ENCODE measurements at regions of chr21 and their contacts with region 1.

Region 1: GRCh38 chr21:44752634-44753291 is 41.4 kb upstream of the TSPEAR start:
- DNase-seq: no peak
- H3K4me3 ChIP-seq: no peak overlapping the region
- H3K27ac ChIP-seq: no peak overlapping the region
- H3K4me1 ChIP-seq: peaks cover 0 to 33% (median 18%) of the 10 kb centered on the region in 4 experiments; a peak in 6 of 7 replicates
- H3K27me3 ChIP-seq: 0 out of 7 replicates have a peak, but pooled peaks cover 0 to 7% (median under 1%) of the 10 kb centered on the region in 4 experiments
- CTCF ChIP-seq: peak in 1 of 3 experiments; percentile 35; a peak in 1 of 4 replicates
- EP300 ChIP-seq: no peak
- POLR2A ChIP-seq: no peak
- RAD21 ChIP-seq: peak in 1 of 2 experiments; percentile 6; a peak in 1 of 4 replicates

Region 2: GRCh38 chr21:44338971-44339910 is 413.5 kb before region 1 on chr21 and contains the start of gene CFAP410:
- CTCF ChIA-PET with region 1: no interaction called
- POLR2A ChIA-PET with region 1: no interaction called
- DNase-seq: peak; percentile 84 to 97
- H3K4me3 ChIP-seq: peak within 1 kb of the TSS; percentile 77 to 91 (median 80)
- H3K27ac ChIP-seq: peak within 1 kb of the TSS; percentile 88
- H3K4me1 ChIP-seq: peaks cover 0 to 7% (median under 1%) of the 10 kb centered on the region in 4 experiments; a peak in 2 of 7 replicates
- H3K27me3 ChIP-seq: no peaks in the 10 kb centered on the region
- CTCF ChIP-seq: no peak
- EP300 ChIP-seq: no peak; a peak in 1 of 3 replicates
- POLR2A ChIP-seq: peak in 1 of 2 experiments; percentile 73; a peak in 2 of 3 replicates
- RAD21 ChIP-seq: peak in 1 of 2 experiments; percentile 16; a peak in 1 of 4 replicates
- total RNA-seq, gene CFAP410: 10.6 and 11.6 TPM in 2 replicates

Region 3: GRCh38 chr21:44568754-44569556 is 183.8 kb before region 1 on chr21:
- CTCF ChIA-PET with region 1: no interaction called
- POLR2A ChIA-PET with region 1: no interaction called
- DNase-seq: no peak
- H3K4me3 ChIP-seq: no peak overlapping the region
- H3K27ac ChIP-seq: no peak overlapping the region
- H3K4me1 ChIP-seq: peaks cover 0 to 3% (median 0%) of the 10 kb centered on the region in 4 experiments; a peak in 1 of 7 replicates
- H3K27me3 ChIP-seq: no peaks in the 10 kb centered on the region
- CTCF ChIP-seq: no peak
- EP300 ChIP-seq: no peak
- POLR2A ChIP-seq: no peak
- RAD21 ChIP-seq: no peak

Region 4: GRCh38 chr21:44718571-44718970 is 34.2 kb before region 1 on chr21:
- CTCF ChIA-PET with region 1: interaction called, 11 read pairs
- POLR2A ChIA-PET with region 1: interaction called, 4 read pairs
- DNase-seq: peak in 1 of 2 experiments; percentile 56
- H3K4me3 ChIP-seq: no peak overlapping the region
- H3K27ac ChIP-seq: no peak overlapping the region
- H3K4me1 ChIP-seq: peaks cover 5 to 18% (median 10%) of the 10 kb centered on the region in 4 experiments
- H3K27me3 ChIP-seq: peaks cover 0 to 17% (median 5%) of the 10 kb centered on the region in 4 experiments; a peak in 4 of 7 replicates
- CTCF ChIP-seq: peak; percentile 64 to 86 (median 69)
- EP300 ChIP-seq: no peak
- POLR2A ChIP-seq: no peak
- RAD21 ChIP-seq: peak; percentile 63 to 73

Region 5: GRCh38 chr21:44810779-44811178 is 58.0 kb after region 1 on chr21:
- CTCF ChIA-PET with region 1: no interaction called
- POLR2A ChIA-PET with region 1: no interaction called
- DNase-seq: no peak
- H3K4me3 ChIP-seq: no peak overlapping the region
- H3K27ac ChIP-seq: no peak overlapping the region
- H3K4me1 ChIP-seq: peaks cover 0 to 7% (median 2%) of the 10 kb centered on the region in 4 experiments; a peak in 4 of 7 replicates
- H3K27me3 ChIP-seq: no peaks in the 10 kb centered on the region
- CTCF ChIP-seq: no peak
- EP300 ChIP-seq: no peak
- POLR2A ChIP-seq: no peak
- RAD21 ChIP-seq: no peak

Region 6: DNA sequence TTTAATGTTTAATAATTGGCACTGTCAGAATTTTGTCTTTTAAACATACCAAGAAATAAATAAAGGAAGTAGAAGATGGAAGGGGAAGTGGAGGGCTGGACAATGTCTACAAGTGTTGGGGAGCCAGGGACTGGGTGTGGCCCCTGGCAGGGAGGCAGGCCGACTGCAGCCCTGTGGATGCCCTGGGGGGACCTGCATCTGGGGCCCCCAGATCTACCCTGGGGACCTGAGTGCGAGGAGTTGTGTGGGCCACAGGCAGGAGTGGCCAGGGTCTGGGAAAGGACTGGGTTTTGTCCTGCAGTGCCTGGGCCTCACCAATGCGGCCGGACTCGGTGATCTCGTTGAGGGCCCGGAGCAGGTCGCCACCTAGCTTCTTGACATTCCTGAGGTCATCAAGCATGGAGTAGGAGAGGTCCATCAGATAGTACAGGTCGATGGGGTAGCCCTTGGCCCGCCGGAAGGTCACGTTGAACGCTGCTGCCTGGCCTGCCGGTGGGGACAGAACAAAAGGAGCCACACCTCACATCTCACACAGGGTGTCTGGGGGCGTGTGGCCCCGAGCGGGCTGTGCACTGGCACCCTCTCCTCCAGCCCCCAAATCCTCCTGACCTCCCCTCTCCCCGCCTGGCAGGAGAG is 150.4 kb after region 1 on chr21:
- CTCF ChIA-PET with region 1: no interaction called
- POLR2A ChIA-PET with region 1: no interaction called
- DNase-seq: no peak
- H3K4me3 ChIP-seq: no peak overlapping the region
- H3K27ac ChIP-seq: no peak overlapping the region
- H3K4me1 ChIP-seq: peaks cover 0 to 9% (median under 1%) of the 10 kb centered on the region in 4 experiments; a peak in 3 of 7 replicates
- H3K27me3 ChIP-seq: peaks cover 0 to 2% (median under 1%) of the 10 kb centered on the region in 4 experiments; a peak in 1 of 7 replicates
- CTCF ChIP-seq: no peak
- EP300 ChIP-seq: no peak
- POLR2A ChIP-seq: no peak
- RAD21 ChIP-seq: no peak

Measured in H1 (cell line).